Aorta (tissue), 5 donors: ENCODE measurements at regions of chr19 and their contacts with region 1.

Region 1: DNA sequence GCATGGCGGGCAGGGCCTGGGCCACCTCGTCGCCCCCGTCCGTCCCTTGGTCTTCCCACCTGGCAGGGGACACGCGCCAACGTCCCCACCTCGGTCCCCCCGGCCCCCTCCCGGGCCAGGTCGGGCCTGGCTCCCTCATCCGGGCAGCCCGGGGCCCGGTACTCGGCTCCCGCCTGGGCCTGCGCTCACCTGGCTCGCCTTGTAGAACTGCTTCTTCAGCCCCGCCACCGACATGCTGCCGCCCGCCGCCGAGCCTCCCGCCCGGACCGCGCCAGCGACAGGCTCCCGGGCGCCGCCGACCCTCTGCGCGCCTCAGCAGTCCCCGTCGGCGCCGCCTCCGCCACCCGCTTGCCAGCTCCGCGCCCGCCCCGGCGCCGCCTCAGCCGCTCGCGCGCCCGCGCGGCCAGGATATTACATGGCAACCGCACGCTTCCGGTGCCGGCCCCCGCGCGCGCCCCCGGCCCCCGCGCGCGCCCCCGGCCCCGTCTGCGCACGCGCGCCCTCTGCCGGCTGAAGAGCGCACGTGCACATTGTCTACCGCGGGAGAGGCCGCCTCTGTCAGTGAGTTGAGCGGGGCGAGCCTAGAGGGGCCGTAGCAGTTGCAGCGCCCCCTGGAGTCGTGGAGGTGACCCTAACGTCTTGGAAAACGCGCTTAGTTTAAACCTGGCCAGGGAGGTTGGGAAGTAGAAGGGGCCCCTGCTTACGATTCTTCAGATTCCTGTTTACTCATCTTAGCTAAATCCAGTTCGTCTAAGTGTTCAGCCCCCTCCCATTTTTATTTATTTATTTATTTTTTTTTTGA is at the start of gene SH3GL1:
- DNase-seq: peak; percentile 93 to 96
- ATAC-seq: peak; percentile 89
- H3K4me3 ChIP-seq: peak within 1 kb of the TSS; percentile 62 to 98
- H3K27ac ChIP-seq: peak within 1 kb of the TSS; percentile 39 to 53
- H3K4me1 ChIP-seq: no peaks in the 10 kb centered on the region
- H3K27me3 ChIP-seq: no peaks in the 10 kb centered on the region
- total RNA-seq, gene SH3GL1: 66.5 to 69.7 TPM

Region 2: DNA sequence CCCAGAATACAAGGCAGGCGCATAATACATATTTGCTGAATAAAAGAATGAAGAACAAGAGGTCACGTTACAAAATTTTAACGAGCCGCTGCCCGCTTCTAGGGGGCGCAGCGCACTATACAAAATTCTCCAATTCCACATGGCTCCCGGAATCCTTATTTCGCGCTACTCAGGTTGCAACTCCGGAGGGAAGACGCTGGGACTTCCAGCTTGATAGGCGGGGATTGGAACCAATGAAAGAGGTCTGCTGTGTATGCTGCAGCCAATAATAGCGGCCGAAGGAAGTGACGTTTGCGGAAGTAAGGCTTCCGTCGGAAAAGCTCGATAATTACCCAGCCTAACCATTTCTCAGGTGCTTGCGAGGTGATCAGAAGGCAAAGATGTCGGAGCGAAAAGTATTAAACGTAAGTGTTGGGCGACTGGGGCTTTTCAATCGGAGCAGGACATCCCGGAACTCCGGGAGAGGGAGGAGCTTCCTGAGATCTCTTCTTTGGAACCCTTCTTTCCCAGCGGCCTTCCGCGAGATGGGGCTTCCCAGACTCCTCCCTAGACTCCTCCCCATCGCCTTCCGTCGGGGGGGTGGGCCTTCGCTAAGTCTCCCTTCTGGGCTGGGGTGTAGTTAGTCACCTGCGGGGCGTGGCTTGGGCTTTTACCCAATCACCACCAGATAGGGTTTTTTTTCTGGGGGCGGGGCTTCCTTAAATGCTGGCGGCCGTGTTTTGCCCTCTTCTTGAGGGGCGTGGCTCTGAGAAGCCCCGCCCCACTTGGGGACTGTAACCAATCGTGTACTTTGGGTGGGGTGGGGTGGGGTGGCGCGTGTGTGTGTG is 153.4 kb before region 1 on chr19 and contains the start of gene YJU2:
- intact Hi-C with region 1: loop called in 1 of 2 experiments (anchors 5 kb)
- DNase-seq: peak; percentile 98 to 100
- ATAC-seq: peak; percentile 98
- H3K4me3 ChIP-seq: peak within 1 kb of the TSS; percentile 76 to 79
- H3K27ac ChIP-seq: peak within 1 kb of the TSS; percentile 69 to 87
- H3K4me1 ChIP-seq: no peaks in the 10 kb centered on the region
- H3K27me3 ChIP-seq: no peaks in the 10 kb centered on the region
- total RNA-seq, gene YJU2: 12.5 to 15.0 TPM

Region 3: GRCh38 chr19:4267101-4267900 is 133.0 kb before region 1 on chr19:
- intact Hi-C with region 1: loop called in 1 of 2 experiments (anchors 5 kb)
- DNase-seq: peak; percentile 54 to 85
- ATAC-seq: peak; percentile 70
- H3K4me3 ChIP-seq: no peak overlapping the region
- H3K27ac ChIP-seq: no peak overlapping the region
- H3K4me1 ChIP-seq: no peaks in the 10 kb centered on the region
- H3K27me3 ChIP-seq: no peaks in the 10 kb centered on the region

Region 4: GRCh38 chr19:4342615-4343369 is 57.5 kb before region 1 on chr19:
- intact Hi-C with region 1: loop called (anchors 1 to 5 kb)
- DNase-seq: peak; percentile 96 to 98
- ATAC-seq: peak; percentile 97
- H3K4me3 ChIP-seq: peak overlapping the region; percentile 57 to 71
- H3K27ac ChIP-seq: peak overlapping the region in 1 of 2 donors; percentile 54
- H3K4me1 ChIP-seq: peaks cover 0 to 2% of the 10 kb centered on the region in 2 donors
- H3K27me3 ChIP-seq: no peaks in the 10 kb centered on the region

Region 5: DNA sequence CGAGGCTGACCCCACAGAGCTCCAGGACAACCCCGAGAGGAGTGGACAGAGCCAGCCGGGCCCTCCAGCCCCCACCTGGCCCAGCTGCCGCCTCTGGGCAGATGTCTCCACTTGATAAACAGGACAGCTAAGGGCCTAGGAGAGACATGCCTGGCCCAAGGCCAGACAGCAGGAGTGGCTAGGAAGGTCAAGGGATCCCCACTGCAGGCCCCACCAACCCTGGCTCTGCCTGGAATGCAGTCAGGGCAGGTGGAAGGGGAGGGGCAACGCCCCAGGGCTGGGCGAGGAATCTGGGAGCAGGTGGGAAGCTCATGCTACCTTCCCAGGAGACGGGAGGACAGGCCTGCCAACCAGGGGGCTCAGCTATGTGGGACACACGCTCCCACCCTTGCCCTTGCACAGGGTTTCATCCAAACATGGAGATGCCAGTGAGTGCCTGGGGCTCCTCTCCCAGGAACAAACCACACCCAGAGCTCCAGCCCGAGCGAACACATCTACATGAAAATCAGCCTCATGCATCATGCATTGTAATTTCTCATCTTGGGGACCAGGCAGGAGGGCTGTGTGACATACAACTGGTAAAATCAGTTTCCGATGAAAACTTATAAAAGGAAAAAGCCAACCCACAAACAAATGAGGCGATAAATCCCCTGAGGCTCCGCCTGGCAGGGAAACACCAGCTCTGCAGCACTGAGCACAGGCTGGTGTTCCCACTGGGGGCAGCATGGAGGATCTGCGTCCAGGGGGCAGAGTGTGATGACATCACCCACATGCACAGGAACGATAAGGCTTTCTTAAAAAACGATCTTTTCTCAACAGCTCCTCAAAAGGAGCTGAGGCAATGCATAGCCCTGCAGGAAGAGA is 24.9 kb before region 1 on chr19:
- intact Hi-C with region 1: no loop called
- DNase-seq: peak; percentile 72 to 88
- ATAC-seq: no peak
- H3K4me3 ChIP-seq: no peak overlapping the region
- H3K27ac ChIP-seq: peak overlapping the region; percentile 40 to 88
- H3K4me1 ChIP-seq: peaks cover 0 to 6% of the 10 kb centered on the region in 2 donors
- H3K27me3 ChIP-seq: no peaks in the 10 kb centered on the region

Region 6: DNA sequence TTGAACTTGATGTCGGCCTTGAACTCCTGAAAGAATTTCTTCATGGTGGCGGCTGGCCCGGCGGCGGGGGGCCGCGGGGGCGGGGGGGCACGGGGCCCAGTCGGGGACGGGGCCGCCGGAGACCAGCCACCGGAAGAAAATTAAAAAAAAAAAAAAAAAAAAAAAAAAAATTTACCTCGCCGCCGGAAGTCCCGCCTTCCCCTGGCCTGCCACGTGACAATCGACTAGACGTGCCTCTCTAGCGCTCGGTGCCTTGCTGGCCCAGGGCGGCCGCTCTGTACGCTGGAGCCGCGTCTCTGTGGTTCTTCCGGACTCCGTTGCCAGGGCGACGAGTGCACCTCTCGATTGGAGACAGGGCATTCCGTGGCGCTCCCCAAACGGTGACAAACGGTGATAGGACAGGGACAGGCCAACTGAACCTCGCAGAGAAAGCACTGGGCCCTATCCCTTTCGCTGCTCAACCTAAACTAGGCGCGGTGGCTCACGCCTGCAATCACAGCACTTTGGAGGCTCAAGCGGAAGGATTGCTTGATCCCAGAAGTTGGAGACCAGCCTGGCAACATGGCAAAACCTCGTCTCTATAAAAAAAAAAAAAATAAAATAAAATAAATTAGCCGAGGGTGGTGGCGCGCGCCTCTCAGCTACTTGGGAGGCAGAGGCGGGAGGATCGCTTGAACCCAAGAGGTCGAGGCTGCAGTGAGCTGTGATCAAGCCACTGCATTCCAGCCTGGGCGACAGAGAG is 57.5 kb after region 1 on chr19 and contains the start of gene UBXN6:
- intact Hi-C with region 1: loop called (anchors 2 to 5 kb)
- DNase-seq: peak; percentile 99
- ATAC-seq: peak; percentile 96
- H3K4me3 ChIP-seq: peak within 1 kb of the TSS; percentile 60 to 63
- H3K27ac ChIP-seq: no peak within 1 kb of the TSS
- H3K4me1 ChIP-seq: no peaks in the 10 kb centered on the region
- H3K27me3 ChIP-seq: no peaks in the 10 kb centered on the region
- total RNA-seq, gene UBXN6: 84.9 to 86.7 TPM

Region 7: GRCh38 chr19:4754248-4754647 is 353.9 kb after region 1 on chr19:
- intact Hi-C with region 1: no loop called
- DNase-seq: no peak
- ATAC-seq: no peak
- H3K4me3 ChIP-seq: no peak overlapping the region
- H3K27ac ChIP-seq: no peak overlapping the region
- H3K4me1 ChIP-seq: no peaks in the 10 kb centered on the region
- H3K27me3 ChIP-seq: no peaks in the 10 kb centered on the region